GM12878 (cell line): ENCODE measurements at regions of chr2 and their contacts with region 1.

Region 1: DNA sequence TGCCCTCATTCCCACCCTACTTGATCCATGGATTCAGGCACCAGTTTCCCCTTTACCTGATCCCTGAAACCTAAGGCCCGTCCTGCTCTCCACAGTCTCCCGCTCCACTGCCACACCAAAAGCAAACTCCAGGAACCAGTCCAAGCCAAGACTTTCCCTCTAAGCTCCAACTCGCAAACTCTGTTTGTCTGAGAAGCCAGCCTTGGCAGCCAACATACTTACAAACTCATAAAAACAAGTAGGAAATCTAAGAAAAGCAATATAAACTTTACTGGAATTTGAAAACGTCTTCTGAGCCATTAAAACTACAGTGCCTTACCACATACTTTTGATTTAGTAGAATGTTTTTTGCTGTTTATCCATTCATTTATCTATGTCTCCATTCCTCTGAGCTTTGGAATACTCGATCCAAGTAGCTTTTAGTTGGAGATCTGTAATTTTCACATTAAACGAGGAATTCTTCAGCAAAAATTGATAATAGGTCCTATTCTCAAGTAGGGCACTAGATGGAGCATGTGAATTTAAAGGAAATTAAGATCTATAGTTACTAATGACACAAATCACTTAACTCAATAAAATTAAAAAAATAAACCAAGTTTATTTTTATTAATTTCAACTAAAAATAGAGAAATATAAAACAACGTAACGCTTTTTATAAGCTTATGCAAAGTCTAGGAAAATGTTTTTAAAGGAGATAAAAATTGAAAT is 199.7 kb downstream of the MYO3B start:
- DNase-seq: no peak
- ATAC-seq: no peak
- H3K4me3 ChIP-seq: no peak overlapping the region
- H3K27ac ChIP-seq: no peak overlapping the region
- H3K4me1 ChIP-seq: no peaks in the 10 kb centered on the region
- H3K27me3 ChIP-seq: no peaks in the 10 kb centered on the region
- CTCF ChIP-seq: no peak
- EP300 ChIP-seq: no peak
- POLR2A ChIP-seq: no peak
- RAD21 ChIP-seq: no peak

Region 2: DNA sequence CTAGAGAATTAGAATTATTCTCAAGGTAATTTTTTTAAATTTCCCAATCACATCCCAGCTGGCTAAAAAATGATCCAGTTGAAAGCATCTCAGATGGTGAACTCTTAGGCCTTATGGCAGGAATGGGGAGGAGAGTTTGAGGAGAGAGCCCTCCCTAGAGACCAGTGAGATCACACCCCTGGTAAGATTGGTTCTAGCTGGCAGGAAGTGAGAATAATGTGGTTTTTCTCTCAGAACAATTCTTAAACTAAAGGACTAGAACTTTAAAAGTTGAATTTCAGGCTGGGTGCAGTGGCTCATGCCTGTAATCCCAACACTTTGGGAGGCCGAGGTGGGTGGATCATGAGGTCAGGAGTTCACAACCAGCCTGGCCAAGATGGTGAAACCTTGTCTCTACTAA is 79.5 kb before region 1 on chr2:
- CTCF ChIA-PET with region 1: no interaction called
- POLR2A ChIA-PET with region 1: no interaction called
- RAD21 ChIA-PET with region 1: no interaction called
- SMC1A ChIA-PET with region 1: no interaction called
- in situ Hi-C with region 1: no loop called
- intact Hi-C with region 1: no loop called
- DNase-seq: peak; percentile 47
- ATAC-seq: peak; percentile 99
- H3K4me3 ChIP-seq: no peak overlapping the region
- H3K27ac ChIP-seq: no peak overlapping the region
- H3K4me1 ChIP-seq: no peaks in the 10 kb centered on the region
- H3K27me3 ChIP-seq: no peaks in the 10 kb centered on the region
- CTCF ChIP-seq: no peak
- EP300 ChIP-seq: peak in 1 of 2 experiments; percentile 41; a peak in 1 of 4 replicates
- POLR2A ChIP-seq: no peak
- RAD21 ChIP-seq: no peak

Region 3: GRCh38 chr2:170361090-170361936 is 16.3 kb before region 1 on chr2:
- CTCF ChIA-PET with region 1: interaction called, 5 read pairs
- POLR2A ChIA-PET with region 1: interaction called, 3 read pairs
- RAD21 ChIA-PET with region 1: interaction called, 4 read pairs
- SMC1A ChIA-PET with region 1: interaction called, 10 read pairs
- in situ Hi-C with region 1: no loop called
- intact Hi-C with region 1: no loop called
- DNase-seq: peak; percentile 26
- ATAC-seq: peak; percentile 97
- H3K4me3 ChIP-seq: no peak overlapping the region
- H3K27ac ChIP-seq: no peak overlapping the region
- H3K4me1 ChIP-seq: no peaks in the 10 kb centered on the region
- H3K27me3 ChIP-seq: no peaks in the 10 kb centered on the region
- CTCF ChIP-seq: peak; percentile 76 to 87 (median 80)
- EP300 ChIP-seq: no peak
- POLR2A ChIP-seq: no peak
- RAD21 ChIP-seq: peak; percentile 65

Region 4: GRCh38 chr2:170391018-170391417 is 13.4 kb after region 1 on chr2:
- CTCF ChIA-PET with region 1: interaction called, 12 read pairs
- POLR2A ChIA-PET with region 1: no interaction called
- RAD21 ChIA-PET with region 1: interaction called, 4 read pairs
- SMC1A ChIA-PET with region 1: interaction called, 8 read pairs
- in situ Hi-C with region 1: no loop called
- intact Hi-C with region 1: no loop called
- DNase-seq: no peak
- ATAC-seq: no peak
- H3K4me3 ChIP-seq: no peak overlapping the region
- H3K27ac ChIP-seq: no peak overlapping the region
- H3K4me1 ChIP-seq: no peaks in the 10 kb centered on the region
- H3K27me3 ChIP-seq: no peaks in the 10 kb centered on the region
- CTCF ChIP-seq: no peak
- EP300 ChIP-seq: no peak
- POLR2A ChIP-seq: no peak
- RAD21 ChIP-seq: no peak